Activated B cell treated with CpG ODN at 0.5 μM for 24 hours (primary cell): ENCODE measurements at regions of chr10 and their contacts with region 1.

Region 1: DNA sequence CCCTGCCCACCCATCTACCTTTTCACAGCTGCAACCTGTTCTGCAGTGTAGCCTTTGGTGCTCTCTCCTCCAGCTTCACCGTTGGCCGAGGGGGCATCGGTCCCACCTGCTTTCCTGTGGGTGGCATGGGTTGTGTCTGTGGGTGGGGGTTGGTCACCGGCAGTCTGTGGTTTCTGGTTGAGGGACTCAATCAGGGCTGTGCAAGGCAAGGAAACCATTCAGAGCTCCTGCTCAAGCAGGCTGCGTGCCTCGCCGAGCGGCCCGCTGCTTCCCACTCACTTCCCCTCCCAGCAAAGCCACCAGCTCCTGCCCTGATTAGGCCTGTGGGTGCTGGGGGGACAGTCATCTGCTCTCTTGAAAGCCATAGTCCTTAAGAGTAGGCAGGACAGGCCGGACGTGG is 9.8 kb downstream of the DNAJB12 start:
- DNase-seq: no peak
- ATAC-seq: no peak
- H3K4me3 Mint-ChIP-seq: no peak overlapping the region
- H3K27ac Mint-ChIP-seq: no peak overlapping the region
- H3K4me1 Mint-ChIP-seq: peaks cover 19% of the 10 kb centered on the region
- H3K27me3 Mint-ChIP-seq: no peaks in the 10 kb centered on the region
- CTCF ChIP-seq: no peak

Region 2: DNA sequence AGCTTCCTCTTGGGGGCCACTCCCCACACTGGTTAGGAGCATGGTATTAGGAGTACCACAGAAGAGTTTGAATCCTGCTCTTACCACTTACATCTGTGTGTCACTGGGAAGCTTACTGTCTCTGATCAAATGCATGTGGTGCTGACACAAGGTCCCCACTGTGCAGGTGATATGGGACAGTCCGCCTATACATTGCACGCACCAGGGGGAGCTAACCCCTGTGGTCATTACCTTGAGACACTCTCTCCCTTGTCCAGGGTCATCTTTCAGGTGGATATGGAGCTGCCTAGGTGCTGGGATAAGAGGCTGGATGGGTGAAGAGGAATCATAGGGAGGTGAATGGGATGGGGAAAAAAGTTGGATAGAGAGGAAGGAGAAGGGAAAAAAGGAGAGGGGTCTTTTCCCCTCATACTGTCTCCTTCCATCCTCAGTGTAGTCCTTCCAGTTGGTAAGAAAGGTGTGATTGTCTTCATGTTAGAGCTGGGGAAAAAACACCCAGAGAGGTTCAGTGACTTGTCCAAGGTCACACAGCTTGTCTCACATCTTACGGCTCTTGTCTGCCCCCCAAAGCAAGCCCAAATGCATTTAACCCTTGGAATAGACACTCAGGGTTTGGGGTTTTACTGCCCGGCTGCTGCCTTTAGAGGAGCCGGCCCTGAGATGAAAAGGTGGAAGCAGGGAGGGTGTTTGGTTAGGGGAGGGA is 822.3 kb before region 1 on chr10:
- CTCF ChIA-PET with region 1: no interaction called
- POLR2A ChIA-PET with region 1: no interaction called
- intact Hi-C with region 1: no loop called
- DNase-seq: no peak
- ATAC-seq: no peak
- H3K4me3 Mint-ChIP-seq: no peak overlapping the region
- H3K27ac Mint-ChIP-seq: no peak overlapping the region
- H3K4me1 Mint-ChIP-seq: no peaks in the 10 kb centered on the region
- H3K27me3 Mint-ChIP-seq: peaks cover 21% of the 10 kb centered on the region
- CTCF ChIP-seq: no peak

Region 3: GRCh38 chr10:71554671-71555070 is 790.3 kb before region 1 on chr10:
- CTCF ChIA-PET with region 1: no interaction called
- POLR2A ChIA-PET with region 1: no interaction called
- intact Hi-C with region 1: no loop called
- DNase-seq: no peak
- ATAC-seq: no peak
- H3K4me3 Mint-ChIP-seq: no peak overlapping the region
- H3K27ac Mint-ChIP-seq: no peak overlapping the region
- H3K4me1 Mint-ChIP-seq: no peaks in the 10 kb centered on the region
- H3K27me3 Mint-ChIP-seq: peaks cover 10% of the 10 kb centered on the region
- CTCF ChIP-seq: no peak

Region 4: DNA sequence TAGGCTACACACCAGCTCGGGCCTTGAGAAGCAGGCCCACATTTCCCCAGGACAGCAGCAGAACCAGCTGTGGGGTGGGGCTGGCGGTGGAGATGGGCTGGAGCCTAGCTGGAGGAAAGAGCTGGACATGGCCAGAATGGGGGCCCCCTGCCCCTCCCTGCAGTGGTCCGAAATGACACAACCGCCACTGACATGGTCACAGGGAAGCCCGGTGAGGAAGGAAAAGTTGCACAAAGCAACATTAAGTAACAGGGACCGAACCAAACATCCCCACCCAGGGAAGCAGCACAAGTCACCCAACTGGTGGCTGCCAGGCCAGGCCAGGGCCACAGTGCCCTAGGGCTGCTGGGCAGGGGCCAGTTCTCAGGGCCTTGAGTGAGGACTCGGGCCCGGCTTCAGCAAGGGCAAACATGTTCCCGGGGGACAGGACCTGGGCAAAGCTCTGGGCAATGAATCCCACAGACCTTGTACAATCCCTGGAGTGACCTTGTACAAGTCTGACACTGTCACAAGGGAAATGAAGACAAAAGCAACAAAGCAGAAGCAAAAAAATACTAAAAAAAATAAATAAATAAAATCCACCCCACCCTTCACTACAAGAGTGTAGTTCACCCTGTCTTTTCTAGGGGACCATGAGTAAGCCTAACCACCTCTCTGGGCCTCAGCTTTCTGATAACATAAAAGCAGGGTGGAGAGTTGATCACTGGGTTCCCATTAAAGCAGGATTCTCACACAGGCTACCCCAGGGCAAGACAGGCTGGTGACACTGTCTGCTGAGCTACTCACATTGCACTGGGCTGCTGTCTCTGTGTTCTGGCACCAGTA is 526.9 kb before region 1 on chr10:
- CTCF ChIA-PET with region 1: no interaction called
- POLR2A ChIA-PET with region 1: interaction called, 11 read pairs
- intact Hi-C with region 1: no loop called
- DNase-seq: no peak
- ATAC-seq: no peak
- H3K4me3 Mint-ChIP-seq: no peak overlapping the region
- H3K27ac Mint-ChIP-seq: no peak overlapping the region
- H3K4me1 Mint-ChIP-seq: peaks cover 2% of the 10 kb centered on the region
- H3K27me3 Mint-ChIP-seq: no peaks in the 10 kb centered on the region
- CTCF ChIP-seq: no peak

Region 5: DNA sequence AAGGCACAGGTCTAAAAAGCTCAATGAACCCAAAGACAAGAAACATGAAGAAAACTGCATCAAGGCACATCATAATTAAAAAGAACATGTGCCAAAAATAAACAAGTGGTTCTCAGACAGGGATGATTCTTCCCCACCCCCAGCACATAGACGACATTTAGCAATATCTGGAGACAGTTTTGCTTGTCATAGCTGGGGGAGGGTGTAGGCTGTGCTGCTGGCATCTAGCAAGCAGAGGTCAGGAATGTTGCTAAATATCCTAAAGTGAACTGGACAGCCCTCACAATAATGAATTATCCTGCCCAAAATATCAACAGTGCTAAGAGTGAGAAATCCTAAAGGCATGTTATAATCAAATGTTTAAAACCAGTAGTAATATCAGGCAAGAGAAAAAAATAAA is 158.3 kb after region 1 on chr10:
- CTCF ChIA-PET with region 1: no interaction called
- POLR2A ChIA-PET with region 1: no interaction called
- intact Hi-C with region 1: no loop called
- DNase-seq: no peak
- ATAC-seq: no peak
- H3K4me3 Mint-ChIP-seq: no peak overlapping the region
- H3K27ac Mint-ChIP-seq: no peak overlapping the region
- H3K4me1 Mint-ChIP-seq: peaks cover 6% of the 10 kb centered on the region
- H3K27me3 Mint-ChIP-seq: no peaks in the 10 kb centered on the region
- CTCF ChIP-seq: no peak